ENCODE measurements at regions of chr4 and their contacts with region 1.

Region 1: GRCh38 chr4:84932462-84932861 is 34.0 kb downstream of the WDFY3 start:
- DNase-seq: no peak
- ATAC-seq: no peak
- H3K4me3 ChIP-seq: no peak overlapping the region
- H3K27ac ChIP-seq: no peak overlapping the region
- H3K4me1 ChIP-seq: peaks cover 17% of the 10 kb centered on the region
- H3K27me3 ChIP-seq: no peaks in the 10 kb centered on the region
- CTCF ChIP-seq: no peak

Region 2: DNA sequence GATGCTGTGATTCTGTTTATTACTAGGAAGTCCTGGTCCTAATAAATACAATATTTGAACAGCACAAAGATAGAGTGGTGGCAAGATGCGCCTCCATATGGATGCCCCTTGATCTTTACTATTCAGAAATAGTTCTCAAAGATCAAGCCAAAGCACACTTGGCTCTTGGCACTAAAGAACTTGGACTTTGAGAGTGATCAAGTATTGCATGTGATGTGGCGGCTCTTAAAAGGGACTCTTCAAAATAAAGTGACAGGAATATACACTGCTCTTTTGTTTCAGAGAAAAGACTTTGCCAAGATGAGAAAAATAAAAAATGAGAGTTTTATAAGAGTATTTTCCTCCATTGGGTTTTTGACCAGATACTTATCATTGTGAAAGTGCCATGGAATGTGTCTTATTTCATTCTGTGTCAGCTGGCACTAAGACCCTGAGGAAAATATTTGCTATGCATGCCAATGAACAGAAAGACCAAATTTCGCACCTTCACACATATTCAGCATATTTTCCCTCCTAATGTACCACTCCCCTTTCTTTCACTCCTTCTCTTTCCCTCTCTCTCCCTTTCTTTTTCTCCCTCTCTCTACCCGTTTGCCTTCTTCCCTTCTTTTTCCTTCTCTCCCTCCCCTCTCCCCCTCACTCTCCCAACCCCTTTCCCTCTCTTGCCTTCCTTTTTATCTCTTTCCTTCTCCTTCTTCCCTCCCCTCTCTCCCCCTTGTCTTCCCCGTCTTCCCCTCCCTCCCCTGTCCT is 577.6 kb after region 1 on chr4:
- intact Hi-C with region 1: loop called in 1 of 2 experiments (anchors 5 kb)
- DNase-seq: no peak
- ATAC-seq: no peak
- H3K4me3 ChIP-seq: no peak overlapping the region
- H3K27ac ChIP-seq: no peak overlapping the region
- H3K4me1 ChIP-seq: no peaks in the 10 kb centered on the region
- H3K27me3 ChIP-seq: no peaks in the 10 kb centered on the region
- CTCF ChIP-seq: no peak